RWPE1 (cell line): ENCODE measurements at regions of chr4 and their contacts with region 1.

Region 1: DNA sequence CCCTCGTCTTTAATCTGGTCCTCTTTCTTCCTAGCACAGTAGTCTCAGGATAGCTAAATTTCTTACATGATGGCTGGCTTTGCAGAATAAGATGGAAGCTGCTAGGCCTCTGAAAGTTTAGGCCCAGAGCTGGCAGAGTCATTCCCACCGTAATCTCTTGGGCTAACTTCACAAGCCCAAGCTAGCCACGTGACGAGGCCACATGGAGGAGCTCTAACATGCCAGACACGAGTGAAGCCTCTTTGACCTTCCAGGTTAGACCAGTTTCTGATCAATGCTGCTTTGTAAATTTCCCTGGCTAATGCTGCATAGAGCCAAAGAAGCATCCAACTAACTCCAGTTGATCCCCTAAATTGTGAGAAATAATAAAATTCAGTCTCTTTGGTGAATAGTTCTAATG is 9.5 kb upstream of the CENPE start:
- DNase-seq: no peak
- H3K27ac ChIP-seq: no peak overlapping the region
- CTCF ChIP-seq: no peak

Region 2: GRCh38 chr4:101730291-101731117 is 1477.2 kb before region 1 on chr4:
- CTCF ChIA-PET with region 1: no interaction called
- POLR2A ChIA-PET with region 1: no interaction called
- DNase-seq: peak; percentile 48
- H3K27ac ChIP-seq: no peak overlapping the region
- CTCF ChIP-seq: peak; percentile 52

Region 3: GRCh38 chr4:103786014-103786413 is 578.3 kb after region 1 on chr4:
- CTCF ChIA-PET with region 1: interaction called, 12 read pairs
- POLR2A ChIA-PET with region 1: no interaction called
- DNase-seq: peak; percentile 5
- H3K27ac ChIP-seq: no peak overlapping the region
- CTCF ChIP-seq: peak; percentile 45